H1 (cell line): ENCODE measurements at regions of chr3 and their contacts with region 1.

Region 1: GRCh38 chr3:10758304-10759061 is 57.5 kb upstream of the SLC6A11 start:
- DNase-seq: peak in 1 of 2 experiments; percentile 69
- H3K4me3 ChIP-seq: no peak overlapping the region
- H3K27ac ChIP-seq: no peak overlapping the region
- H3K4me1 ChIP-seq: peaks cover 0 to 5% (median 0%) of the 10 kb centered on the region in 4 experiments; a peak in 3 of 7 replicates
- H3K27me3 ChIP-seq: peaks cover 0 to 2% (median 0%) of the 10 kb centered on the region in 4 experiments; a peak in 2 of 7 replicates
- CTCF ChIP-seq: peak; percentile 85 to 98 (median 94)
- EP300 ChIP-seq: no peak
- POLR2A ChIP-seq: no peak
- RAD21 ChIP-seq: peak; percentile 96 to 99

Region 2: DNA sequence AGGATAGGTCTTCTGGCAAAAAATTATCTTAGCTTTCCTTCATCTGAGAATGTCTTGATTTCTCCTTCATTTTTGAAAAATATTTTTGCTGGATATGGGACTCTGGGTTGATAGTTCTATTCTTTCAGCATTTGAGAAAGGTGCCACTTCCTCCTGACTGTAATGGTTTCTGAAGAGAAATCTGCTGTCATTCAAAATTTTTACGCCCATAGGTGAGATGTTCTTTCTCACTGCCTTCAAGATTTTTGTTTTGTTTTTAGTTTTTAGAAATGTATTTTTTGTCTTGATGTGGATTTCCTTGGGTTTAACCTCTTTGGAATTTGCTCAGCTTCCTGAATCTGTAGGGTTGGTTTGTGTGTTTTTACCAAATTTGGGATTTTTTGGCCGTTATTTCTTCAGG is 216.0 kb before region 1 on chr3:
- CTCF ChIA-PET with region 1: no interaction called
- POLR2A ChIA-PET with region 1: no interaction called
- DNase-seq: no peak
- H3K4me3 ChIP-seq: no peak overlapping the region
- H3K27ac ChIP-seq: no peak overlapping the region
- H3K4me1 ChIP-seq: no peaks in the 10 kb centered on the region
- H3K27me3 ChIP-seq: no peaks in the 10 kb centered on the region
- CTCF ChIP-seq: no peak
- EP300 ChIP-seq: no peak
- POLR2A ChIP-seq: no peak
- RAD21 ChIP-seq: no peak

Region 3: DNA sequence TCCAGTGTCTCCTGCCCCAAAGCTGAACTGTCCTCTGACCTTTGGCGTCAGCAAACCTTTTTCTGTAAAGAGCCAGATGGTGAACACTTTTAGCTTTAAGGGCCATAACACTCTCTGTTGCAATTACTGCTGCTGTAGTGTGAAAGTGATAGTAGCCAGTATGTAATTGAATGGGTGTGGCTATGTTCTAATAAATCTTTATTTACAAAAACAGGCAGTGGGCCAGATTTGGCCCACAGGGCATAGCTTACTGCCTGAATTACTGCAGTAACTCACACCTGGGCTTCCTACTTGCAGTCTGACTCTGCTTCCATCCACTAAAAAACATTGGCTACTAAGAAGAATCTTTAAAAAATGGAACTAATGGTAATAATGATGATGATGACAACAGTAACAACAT is 10.4 kb before region 1 on chr3:
- CTCF ChIA-PET with region 1: interaction called, 11 read pairs
- POLR2A ChIA-PET with region 1: no interaction called
- DNase-seq: no peak
- H3K4me3 ChIP-seq: no peak overlapping the region
- H3K27ac ChIP-seq: no peak overlapping the region
- H3K4me1 ChIP-seq: no peaks in the 10 kb centered on the region
- H3K27me3 ChIP-seq: peaks cover 0 to 10% (median 0%) of the 10 kb centered on the region in 4 experiments; a peak in 2 of 7 replicates
- CTCF ChIP-seq: no peak
- EP300 ChIP-seq: no peak
- POLR2A ChIP-seq: no peak
- RAD21 ChIP-seq: no peak

Region 4: DNA sequence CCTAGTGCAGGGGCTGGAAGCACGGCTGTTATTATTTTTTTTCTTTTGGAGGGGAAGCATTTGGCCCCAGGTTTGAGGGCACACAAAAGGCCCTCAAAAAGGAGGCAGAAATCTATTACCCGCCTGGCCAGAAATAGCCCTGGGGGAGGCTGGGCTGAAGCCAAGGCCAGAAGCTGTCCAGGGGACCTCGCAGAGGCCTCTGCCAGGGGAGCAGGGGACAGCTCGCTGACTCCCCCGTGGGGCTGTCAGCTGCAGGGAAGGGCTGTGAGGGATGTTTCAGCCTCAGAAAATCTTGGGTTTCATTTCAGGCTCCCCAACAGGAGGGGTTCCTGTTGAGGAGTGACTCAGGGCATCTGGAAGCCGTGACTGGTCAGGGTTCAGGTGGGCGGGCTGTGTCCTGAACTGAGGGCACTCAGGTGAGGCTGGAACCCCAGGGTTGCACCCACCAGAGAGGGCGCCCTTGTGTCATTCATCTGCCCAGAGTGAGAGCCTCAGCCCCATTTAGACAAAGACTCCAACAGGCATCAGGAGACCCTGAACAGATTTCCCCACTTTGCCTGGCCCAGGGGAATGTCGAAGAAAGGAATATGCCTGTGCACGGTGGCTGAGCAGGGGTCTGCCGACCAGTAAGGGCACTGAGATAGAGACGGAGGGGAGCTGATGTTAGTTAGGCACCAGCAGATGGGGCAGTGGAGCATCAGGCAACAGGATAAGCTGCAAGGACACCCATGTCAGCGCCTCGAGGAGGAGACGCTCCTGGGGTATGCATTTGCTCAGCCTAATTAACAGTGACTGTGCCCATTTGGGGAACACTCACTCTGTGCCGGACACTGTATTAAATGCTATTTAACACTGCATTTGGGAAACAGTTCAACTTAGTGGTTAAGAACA is 14.0 kb after region 1 on chr3:
- CTCF ChIA-PET with region 1: interaction called, 193 read pairs
- POLR2A ChIA-PET with region 1: interaction called, 3 read pairs
- DNase-seq: peak; percentile 43 to 89
- H3K4me3 ChIP-seq: no peak overlapping the region
- H3K27ac ChIP-seq: no peak overlapping the region
- H3K4me1 ChIP-seq: no peaks in the 10 kb centered on the region; a peak in 1 of 7 replicates
- H3K27me3 ChIP-seq: peaks cover 0 to 5% (median under 1%) of the 10 kb centered on the region in 4 experiments; a peak in 2 of 7 replicates
- CTCF ChIP-seq: peak; percentile 59 to 74 (median 67)
- EP300 ChIP-seq: no peak
- POLR2A ChIP-seq: no peak
- RAD21 ChIP-seq: peak; percentile 28 to 29

Region 5: GRCh38 chr3:10783357-10784351 is 25.2 kb after region 1 on chr3:
- CTCF ChIA-PET with region 1: interaction called, 52 read pairs
- POLR2A ChIA-PET with region 1: no interaction called
- DNase-seq: peak; percentile 5 to 66
- H3K4me3 ChIP-seq: no peak overlapping the region
- H3K27ac ChIP-seq: no peak overlapping the region
- H3K4me1 ChIP-seq: no peaks in the 10 kb centered on the region
- H3K27me3 ChIP-seq: no peaks in the 10 kb centered on the region; a peak in 1 of 7 replicates
- CTCF ChIP-seq: peak; percentile 44 to 76 (median 69)
- EP300 ChIP-seq: no peak
- POLR2A ChIP-seq: no peak
- RAD21 ChIP-seq: peak; percentile 56 to 69

Region 6: DNA sequence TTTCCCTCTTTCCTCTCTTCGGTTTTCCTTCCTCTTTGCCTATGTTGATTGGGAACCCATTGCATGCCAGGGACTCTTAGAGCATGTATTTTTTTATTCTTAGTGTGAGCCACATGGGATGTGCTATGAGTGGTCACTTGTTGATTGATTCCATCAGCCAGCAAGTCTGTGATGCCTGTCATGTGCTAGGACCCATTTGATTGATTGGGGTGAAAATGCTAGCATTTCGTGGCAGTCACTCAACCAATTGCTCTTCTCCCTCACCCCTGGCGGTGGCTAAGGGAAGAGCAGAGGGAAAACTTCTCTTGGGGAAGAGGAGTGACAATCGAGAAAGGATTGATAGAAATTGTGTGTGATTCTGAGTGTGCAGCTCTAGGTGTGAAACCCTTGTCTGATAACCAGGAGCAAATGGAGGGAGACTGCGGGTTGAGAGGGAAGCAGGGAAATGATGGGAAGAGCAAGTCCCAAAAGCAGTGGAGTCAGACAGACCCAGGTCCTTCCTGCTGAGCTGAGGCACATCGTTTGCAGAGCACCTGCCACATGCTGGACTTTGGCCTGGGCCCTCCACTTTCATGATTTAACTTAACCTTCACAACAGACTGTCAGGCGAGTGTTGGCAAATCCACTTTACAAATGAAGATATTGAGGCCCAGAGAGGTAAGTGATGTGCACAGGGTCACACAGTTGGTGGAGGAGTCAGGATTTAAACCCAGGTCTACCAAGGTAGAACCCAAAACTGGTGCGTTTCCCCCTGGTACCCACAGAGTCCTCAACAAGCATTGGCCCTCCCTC is 97.6 kb after region 1 on chr3:
- CTCF ChIA-PET with region 1: interaction called, 15 read pairs
- POLR2A ChIA-PET with region 1: no interaction called
- DNase-seq: peak in 1 of 2 experiments; percentile 52
- H3K4me3 ChIP-seq: no peak overlapping the region
- H3K27ac ChIP-seq: no peak overlapping the region
- H3K4me1 ChIP-seq: no peaks in the 10 kb centered on the region
- H3K27me3 ChIP-seq: peaks cover 0 to 3% (median 0%) of the 10 kb centered on the region in 4 experiments; a peak in 1 of 7 replicates
- CTCF ChIP-seq: peak; percentile 43 to 76 (median 65); a peak in 3 of 4 replicates
- EP300 ChIP-seq: no peak
- POLR2A ChIP-seq: no peak
- RAD21 ChIP-seq: peak; percentile 29 to 35

Region 7: DNA sequence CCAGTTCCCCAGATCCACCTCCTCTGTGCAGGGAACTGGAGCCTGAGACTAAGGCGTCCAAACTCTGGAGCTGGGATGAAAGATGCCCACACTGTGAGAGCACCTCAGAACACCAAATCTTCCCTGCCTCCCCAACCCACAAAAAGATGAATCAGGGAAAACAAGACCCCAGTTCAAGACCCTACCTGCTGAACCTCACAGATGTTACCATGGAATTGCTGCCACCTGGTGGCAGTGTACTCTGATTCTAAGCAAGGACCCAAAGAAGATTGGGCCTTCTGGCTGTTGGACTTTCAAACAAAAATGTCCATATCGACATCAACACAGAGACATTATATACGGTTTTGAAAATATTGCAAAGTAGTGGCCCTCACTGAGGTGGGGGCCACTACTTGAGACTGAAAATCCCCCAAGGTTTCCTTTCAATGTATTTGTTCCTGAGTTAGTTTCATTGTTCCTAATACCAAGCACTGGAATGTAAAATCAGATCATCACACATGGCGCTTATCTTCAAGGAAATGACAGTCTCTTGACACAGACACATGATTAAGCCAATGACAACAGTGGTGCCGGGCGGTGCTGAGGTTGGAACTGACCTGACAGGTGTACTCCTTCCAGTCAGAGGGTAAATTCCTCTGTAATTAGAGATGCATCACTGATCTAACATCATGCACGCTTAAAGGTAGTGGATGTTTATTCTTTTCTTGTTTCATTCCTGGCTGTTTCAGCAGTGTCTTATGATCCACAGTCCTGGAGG is 125.2 kb after region 1 on chr3:
- CTCF ChIA-PET with region 1: interaction called, 103 read pairs
- POLR2A ChIA-PET with region 1: no interaction called
- DNase-seq: peak in 1 of 2 experiments; percentile 61
- H3K4me3 ChIP-seq: no peak overlapping the region
- H3K27ac ChIP-seq: no peak overlapping the region
- H3K4me1 ChIP-seq: no peaks in the 10 kb centered on the region; a peak in 1 of 7 replicates
- H3K27me3 ChIP-seq: peaks cover 0 to 15% (median 10%) of the 10 kb centered on the region in 4 experiments; a peak in 6 of 7 replicates
- CTCF ChIP-seq: peak in 2 of 3 experiments; percentile 66 to 68; a peak in 3 of 4 replicates
- EP300 ChIP-seq: no peak
- POLR2A ChIP-seq: no peak
- RAD21 ChIP-seq: peak; percentile 70 to 76